Tibial artery (tissue), 4 donors: ENCODE measurements at regions of chr15 and their contacts with region 1.

Region 1: DNA sequence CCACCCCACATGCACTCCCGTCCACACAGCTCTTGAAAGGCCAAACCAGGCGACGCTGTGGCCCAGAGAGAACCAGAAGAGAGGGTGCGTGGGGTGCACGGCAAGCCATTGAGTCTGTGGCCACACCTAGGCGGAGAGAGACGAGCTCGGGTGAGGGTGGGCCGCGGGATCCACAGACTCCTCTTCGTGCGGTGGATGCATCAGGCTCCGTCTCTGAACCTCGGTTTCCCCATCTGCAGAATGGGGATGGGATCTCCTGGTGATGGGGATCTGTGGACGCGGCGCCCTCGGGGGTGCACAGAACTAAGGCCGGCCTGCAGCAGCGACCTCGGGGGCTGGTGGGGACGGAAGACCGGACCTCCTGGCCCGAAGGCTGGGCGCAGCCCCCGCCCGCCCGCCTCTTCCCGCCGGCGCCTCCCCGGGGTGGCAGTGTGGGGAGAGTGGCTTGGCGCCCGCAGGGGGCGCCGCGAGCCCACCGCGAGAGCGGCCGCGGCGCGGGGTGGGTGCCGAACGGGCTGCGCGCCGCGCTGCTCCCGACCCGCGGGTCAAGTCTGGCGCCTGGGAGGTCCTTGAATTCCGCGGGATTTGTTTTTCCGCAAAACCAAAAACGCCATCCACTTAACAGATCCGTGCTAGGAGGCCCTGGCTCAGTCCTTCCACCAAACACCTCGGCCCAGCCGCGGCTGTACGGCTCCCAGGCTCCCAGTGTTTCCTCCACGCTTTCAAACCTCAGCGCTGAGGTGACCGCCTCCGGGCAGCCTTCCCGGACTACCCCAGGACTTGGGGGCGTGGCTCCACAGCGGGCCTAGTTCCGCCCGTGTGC is 13.2 kb upstream of the ADPGK start:
- DNase-seq: peak in 1 of 2 donors; percentile 67
- H3K4me3 ChIP-seq: peak overlapping the region; percentile 49 to 71
- H3K27ac ChIP-seq: peak overlapping the region; percentile 13 to 35
- H3K4me1 ChIP-seq: peaks cover 0 to 26% (median 10%) of the 10 kb centered on the region in 4 donors
- H3K27me3 ChIP-seq: no peaks in the 10 kb centered on the region
- CTCF ChIP-seq: peak; percentile 46 to 79

Region 2: GRCh38 chr15:71443538-71443937 is 1353.2 kb before region 1 on chr15:
- intact Hi-C with region 1: no loop called
- DNase-seq: peak in 1 of 2 donors; percentile 53
- H3K4me3 ChIP-seq: no peak overlapping the region
- H3K27ac ChIP-seq: no peak overlapping the region
- H3K4me1 ChIP-seq: peaks cover 0 to 22% (median 2%) of the 10 kb centered on the region in 4 donors
- H3K27me3 ChIP-seq: no peaks in the 10 kb centered on the region
- CTCF ChIP-seq: peak; percentile 79 to 90

Region 3: DNA sequence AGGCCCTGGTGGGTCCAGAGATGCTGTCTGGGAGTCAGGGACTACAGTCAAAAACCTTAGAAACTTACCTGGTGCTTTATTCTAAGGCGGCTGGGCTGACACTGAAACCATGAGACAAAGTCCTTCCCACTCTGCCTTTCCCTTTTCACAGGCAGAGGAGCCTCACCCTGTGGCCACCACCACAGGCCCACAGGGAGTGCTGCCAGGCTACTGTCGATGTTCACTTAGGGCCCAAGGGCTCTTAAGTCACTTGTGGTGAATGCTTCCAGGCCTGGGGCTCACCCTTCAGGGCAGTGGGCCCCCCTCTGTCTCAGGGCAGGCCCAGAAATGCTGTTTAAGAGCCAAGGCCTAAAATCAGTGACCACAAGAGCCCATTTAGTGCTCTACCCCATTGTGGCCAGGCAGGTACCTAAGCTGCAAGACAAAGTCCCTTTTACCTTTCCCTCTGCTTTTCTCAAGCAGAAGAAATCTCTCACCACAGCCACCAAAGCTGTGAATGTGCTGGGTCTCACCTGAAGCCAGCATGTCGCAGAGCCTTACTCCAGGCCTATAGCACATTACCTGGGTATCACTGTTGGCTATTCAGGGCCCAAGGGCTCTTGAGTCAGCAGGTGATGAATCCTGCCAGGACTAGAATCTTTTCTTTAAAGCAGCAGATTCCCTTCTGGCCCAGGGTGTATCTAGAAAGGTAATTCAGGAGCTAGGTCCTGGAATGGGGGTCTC is 181.8 kb before region 1 on chr15:
- intact Hi-C with region 1: no loop called
- DNase-seq: no peak
- H3K4me3 ChIP-seq: no peak overlapping the region
- H3K27ac ChIP-seq: no peak overlapping the region
- H3K4me1 ChIP-seq: no peaks in the 10 kb centered on the region
- H3K27me3 ChIP-seq: no peaks in the 10 kb centered on the region
- CTCF ChIP-seq: no peak

Region 4: DNA sequence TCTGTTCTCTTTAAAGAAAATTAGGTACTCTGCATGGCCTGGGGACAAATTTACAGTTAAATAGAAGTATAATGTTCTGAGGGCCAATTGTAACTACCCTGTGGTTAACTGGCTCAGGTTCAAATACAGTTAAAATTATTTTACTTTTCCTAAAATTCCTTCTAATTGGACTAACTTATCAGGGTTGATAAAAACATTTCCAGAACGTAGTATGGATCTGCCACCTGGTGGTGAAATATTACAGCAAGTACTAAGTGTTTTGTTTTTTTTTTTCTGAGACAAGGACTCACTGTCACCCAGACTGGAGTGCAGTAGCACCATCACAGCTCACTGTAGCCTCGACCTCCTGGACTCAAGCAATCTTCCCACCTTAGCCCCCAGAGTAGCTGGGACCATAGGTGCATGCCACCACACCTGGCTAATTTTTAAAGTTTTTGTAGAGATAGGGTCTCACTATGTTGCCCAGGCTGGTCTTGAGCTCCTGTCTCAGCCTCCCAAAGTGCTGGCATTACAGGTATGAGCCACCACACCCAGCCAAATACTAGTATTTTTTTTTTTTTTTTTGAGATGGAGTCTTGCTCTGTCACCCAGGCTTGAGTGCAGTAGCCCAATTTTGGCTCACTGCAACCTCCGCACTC is 284.7 kb after region 1 on chr15:
- intact Hi-C with region 1: loop called (anchors 2 kb)
- DNase-seq: no peak
- H3K4me3 ChIP-seq: no peak overlapping the region
- H3K27ac ChIP-seq: no peak overlapping the region
- H3K4me1 ChIP-seq: peaks cover 0 to 47% (median 21%) of the 10 kb centered on the region in 4 donors
- H3K27me3 ChIP-seq: no peaks in the 10 kb centered on the region
- CTCF ChIP-seq: peak; percentile 72

Region 5: GRCh38 chr15:73141216-73141900 is 344.6 kb after region 1 on chr15:
- intact Hi-C with region 1: no loop called
- DNase-seq: no peak
- H3K4me3 ChIP-seq: no peak overlapping the region
- H3K27ac ChIP-seq: no peak overlapping the region
- H3K4me1 ChIP-seq: peaks cover 0 to 14% (median 11%) of the 10 kb centered on the region in 4 donors
- H3K27me3 ChIP-seq: no peaks in the 10 kb centered on the region
- CTCF ChIP-seq: no peak